ENCODE measurements at regions of chr1 and their contacts with region 1.

Region 1: GRCh38 chr1:9816199-9816598 is 7.6 kb downstream of the CLSTN1 start:
- DNase-seq: no peak
- H3K4me3 ChIP-seq: no peak overlapping the region
- H3K27ac ChIP-seq: no peak overlapping the region
- H3K4me1 ChIP-seq: peaks cover 55% of the 10 kb centered on the region
- H3K27me3 ChIP-seq: no peaks in the 10 kb centered on the region
- CTCF ChIP-seq: no peak
- POLR2A ChIP-seq: no peak

Region 2: GRCh38 chr1:9770298-9770697 is 45.9 kb before region 1 on chr1:
- intact Hi-C with region 1: no loop called
- DNase-seq: no peak
- H3K4me3 ChIP-seq: no peak overlapping the region
- H3K27ac ChIP-seq: no peak overlapping the region
- H3K4me1 ChIP-seq: peaks cover 18% of the 10 kb centered on the region
- H3K27me3 ChIP-seq: no peaks in the 10 kb centered on the region
- CTCF ChIP-seq: no peak
- POLR2A ChIP-seq: no peak

Region 3: GRCh38 chr1:9855186-9855585 is 39.0 kb after region 1 on chr1:
- intact Hi-C with region 1: loop called (anchors 2 kb)
- DNase-seq: no peak
- H3K4me3 ChIP-seq: no peak overlapping the region
- H3K27ac ChIP-seq: no peak overlapping the region
- H3K4me1 ChIP-seq: no peaks in the 10 kb centered on the region
- H3K27me3 ChIP-seq: no peaks in the 10 kb centered on the region
- CTCF ChIP-seq: no peak
- POLR2A ChIP-seq: no peak